ENCODE measurements at regions of chr6 and their contacts with region 1.

Region 1: GRCh38 chr6:158819213-158819909 is at the start of gene EZR:
- DNase-seq: peak; percentile 76
- H3K4me3 Mint-ChIP-seq: peak within 1 kb of the TSS; percentile 97
- H3K27ac Mint-ChIP-seq: peak within 1 kb of the TSS; percentile 97
- H3K4me1 Mint-ChIP-seq: peaks cover 17% of the 10 kb centered on the region
- H3K27me3 Mint-ChIP-seq: no peaks in the 10 kb centered on the region
- CTCF ChIP-seq: no peak
- total RNA-seq, gene EZR: 243 and 296 TPM in 2 replicates

Region 2: DNA sequence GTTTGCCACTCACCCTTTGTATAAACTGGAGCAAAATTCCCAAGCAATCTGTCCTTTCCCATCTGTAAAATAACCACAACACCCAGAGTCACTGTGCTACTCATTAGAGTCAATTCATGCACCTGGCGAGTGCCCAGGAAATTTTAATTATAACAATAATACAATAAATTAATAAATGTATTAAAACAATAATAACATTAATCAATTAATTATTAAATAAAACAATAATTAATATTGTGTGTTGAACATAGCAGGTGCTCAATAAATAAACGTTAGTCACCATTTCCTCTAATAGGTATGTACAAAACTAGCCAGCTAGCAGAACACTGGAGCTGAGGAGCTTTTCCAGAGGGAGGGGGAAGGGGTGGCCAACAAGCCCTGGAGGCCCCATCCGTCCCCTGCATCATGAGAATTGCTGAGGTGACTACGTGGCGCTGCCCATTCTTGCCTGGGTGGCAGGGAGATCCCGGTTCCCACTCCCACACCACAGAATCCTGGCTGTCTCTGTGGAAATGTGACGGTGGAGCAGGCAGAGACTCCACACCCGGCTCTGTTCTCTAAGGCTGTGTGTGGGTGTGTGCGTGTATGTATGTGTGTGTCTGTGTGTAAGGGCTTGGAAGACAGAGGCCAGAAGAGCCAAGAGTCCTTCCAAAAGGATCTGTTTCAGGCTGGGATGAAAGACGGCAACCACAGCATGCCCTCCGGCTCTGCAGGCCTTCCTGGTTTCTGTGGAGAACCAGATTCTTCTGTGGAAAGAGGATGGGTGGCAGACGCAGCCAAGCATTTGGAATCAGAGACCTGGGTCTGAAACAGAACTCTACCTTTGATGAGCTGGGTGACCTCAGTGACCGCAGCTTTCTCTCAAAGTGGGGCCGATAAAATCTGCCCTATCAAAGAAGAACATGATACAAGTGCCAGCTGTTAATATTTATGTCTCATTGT is 18.6 kb after region 1 on chr6:
- CTCF ChIA-PET with region 1: interaction called, 4 read pairs
- POLR2A ChIA-PET with region 1: interaction called, 10 read pairs
- intact Hi-C with region 1: no loop called
- DNase-seq: no peak
- H3K4me3 Mint-ChIP-seq: no peak overlapping the region
- H3K27ac Mint-ChIP-seq: peak overlapping the region; percentile 8
- H3K4me1 Mint-ChIP-seq: peaks cover 7% of the 10 kb centered on the region
- H3K27me3 Mint-ChIP-seq: no peaks in the 10 kb centered on the region
- CTCF ChIP-seq: no peak

Region 3: GRCh38 chr6:158846066-158846465 is 26.7 kb after region 1 on chr6:
- CTCF ChIA-PET with region 1: interaction called, 3 read pairs
- POLR2A ChIA-PET with region 1: interaction called, 19 read pairs
- intact Hi-C with region 1: loop called (anchors 1 kb)
- DNase-seq: no peak
- H3K4me3 Mint-ChIP-seq: no peak overlapping the region
- H3K27ac Mint-ChIP-seq: no peak overlapping the region
- H3K4me1 Mint-ChIP-seq: peaks cover 15% of the 10 kb centered on the region
- H3K27me3 Mint-ChIP-seq: no peaks in the 10 kb centered on the region
- CTCF ChIP-seq: no peak

Region 4: DNA sequence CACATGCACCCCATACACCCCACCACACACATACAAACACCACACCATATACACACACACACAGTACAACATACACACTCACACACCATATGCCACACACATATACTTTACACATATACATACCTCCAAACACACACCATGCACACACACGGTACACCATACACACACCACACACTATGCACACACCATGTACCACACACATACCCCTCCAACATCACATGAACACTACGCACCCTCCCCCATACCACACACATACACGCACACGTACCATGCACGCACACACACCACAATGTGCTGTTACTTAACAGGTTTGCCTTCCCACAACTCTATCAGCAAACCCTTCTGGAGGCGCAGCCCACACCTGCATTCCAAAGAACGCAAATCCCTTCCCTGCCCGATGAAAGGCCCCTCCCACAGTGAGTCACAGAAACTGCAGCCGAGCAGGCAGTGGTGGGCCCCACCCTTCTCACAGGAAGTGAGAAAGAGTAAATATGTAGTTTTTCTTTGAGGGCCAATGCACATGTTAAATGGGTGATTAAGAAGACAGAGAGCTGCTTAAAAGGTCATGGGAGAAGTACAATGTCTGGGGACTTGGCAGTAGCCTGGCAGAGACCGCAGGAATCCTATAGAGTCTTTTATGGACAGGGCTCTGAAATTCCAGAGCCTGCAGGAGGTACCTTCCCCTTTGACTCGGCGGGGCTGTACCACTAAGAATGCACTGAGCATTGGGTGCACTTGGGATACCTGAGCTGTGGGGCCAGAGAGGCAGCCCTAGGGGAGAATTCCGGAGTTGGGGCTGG is 33.9 kb after region 1 on chr6:
- CTCF ChIA-PET with region 1: no interaction called
- POLR2A ChIA-PET with region 1: interaction called, 19 read pairs
- intact Hi-C with region 1: loop called (anchors 1 kb)
- DNase-seq: peak; percentile 97
- H3K4me3 Mint-ChIP-seq: no peak overlapping the region
- H3K27ac Mint-ChIP-seq: no peak overlapping the region
- H3K4me1 Mint-ChIP-seq: peaks cover 15% of the 10 kb centered on the region
- H3K27me3 Mint-ChIP-seq: no peaks in the 10 kb centered on the region
- CTCF ChIP-seq: no peak

Region 5: GRCh38 chr6:158897236-158897635 is 77.9 kb after region 1 on chr6:
- CTCF ChIA-PET with region 1: interaction called, 4 read pairs
- POLR2A ChIA-PET with region 1: interaction called, 13 read pairs
- intact Hi-C with region 1: no loop called
- DNase-seq: peak; percentile 48
- H3K4me3 Mint-ChIP-seq: no peak overlapping the region
- H3K27ac Mint-ChIP-seq: peak overlapping the region; percentile 80
- H3K4me1 Mint-ChIP-seq: peaks cover 6% of the 10 kb centered on the region
- H3K27me3 Mint-ChIP-seq: no peaks in the 10 kb centered on the region
- CTCF ChIP-seq: no peak